ENCODE measurements at regions of chr6 and their contacts with region 1.

Region 1: DNA sequence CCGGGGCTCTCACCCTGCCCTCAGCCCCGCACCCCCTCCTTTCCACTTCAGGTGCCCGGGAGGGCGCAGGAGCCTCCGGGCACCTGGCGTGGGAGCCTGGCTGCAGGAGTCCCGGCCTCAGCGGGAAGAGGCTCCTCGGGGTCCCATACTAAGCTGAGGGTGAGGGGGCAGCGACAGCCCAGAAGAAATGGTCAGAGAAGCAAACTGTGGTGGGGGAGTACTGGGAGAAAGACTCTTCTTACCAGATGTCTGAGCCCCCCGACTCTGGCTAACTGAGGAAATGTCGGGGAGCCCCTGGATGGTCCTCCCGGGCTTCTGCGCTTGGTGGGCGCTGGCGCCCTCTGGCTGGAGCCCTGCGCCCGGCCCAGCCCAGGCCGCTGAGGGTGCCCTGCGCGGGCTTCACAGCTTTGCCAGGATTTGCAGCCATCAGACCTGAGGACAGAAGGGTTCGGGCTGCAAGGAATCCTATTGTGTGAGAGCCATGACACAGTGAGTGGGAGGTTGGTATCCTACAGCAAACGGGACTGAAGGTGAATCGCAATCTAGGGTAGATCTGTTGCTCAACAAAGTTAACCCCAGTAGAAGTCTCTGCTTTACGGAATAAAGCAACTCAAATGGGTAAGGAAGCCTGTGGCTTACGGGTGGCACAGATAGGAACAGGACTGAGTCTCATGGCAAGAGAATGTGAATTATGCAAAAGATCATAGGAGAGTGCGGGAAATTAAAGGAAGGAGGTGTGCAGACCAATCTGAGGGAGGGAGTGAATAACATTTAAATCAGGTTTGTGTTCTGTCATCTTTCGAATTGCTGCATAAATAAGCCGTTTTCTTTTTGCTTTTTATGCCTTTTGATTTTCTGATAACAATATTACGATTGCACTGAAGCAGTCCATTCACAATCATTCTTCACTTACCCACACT is 639 bp upstream of the RCAN2 start:
- DNase-seq: peak; percentile 57 to 68
- ATAC-seq: peak; percentile 87 to 91 (median 90)
- H3K4me3 ChIP-seq: peak overlapping the region; percentile 81
- H3K27ac ChIP-seq: peak overlapping the region; percentile 70
- H3K4me1 ChIP-seq: no peaks in the 10 kb centered on the region
- H3K27me3 ChIP-seq: no peaks in the 10 kb centered on the region
- CTCF ChIP-seq: peak; percentile 75

Region 2: DNA sequence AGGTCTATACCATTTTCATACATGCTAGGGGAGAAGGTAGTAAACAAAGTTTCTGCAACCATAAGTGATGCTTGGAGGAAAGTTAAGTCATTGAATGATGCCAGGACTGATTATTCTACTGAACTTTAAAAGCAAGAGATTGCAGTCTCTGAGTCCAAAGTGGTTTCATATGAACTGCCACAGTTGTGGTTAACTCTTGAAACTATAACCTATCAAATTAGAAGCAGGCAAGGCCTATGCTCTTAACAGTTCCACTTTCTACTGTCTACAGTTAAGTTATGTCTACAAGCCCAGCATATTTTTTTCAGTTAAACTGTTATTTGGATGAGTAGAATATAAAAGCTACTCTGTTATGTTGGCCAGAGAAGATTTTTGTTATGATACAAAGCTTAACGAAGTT is 1490.2 kb before region 1 on chr6:
- intact Hi-C with region 1: no loop called
- DNase-seq: no peak
- ATAC-seq: no peak
- H3K4me3 ChIP-seq: no peak overlapping the region
- H3K27ac ChIP-seq: no peak overlapping the region
- H3K4me1 ChIP-seq: no peaks in the 10 kb centered on the region
- H3K27me3 ChIP-seq: no peaks in the 10 kb centered on the region
- CTCF ChIP-seq: no peak

Region 3: GRCh38 chr6:46221222-46221793 is 270.6 kb before region 1 on chr6:
- intact Hi-C with region 1: loop called (anchors 5 to 10 kb)
- DNase-seq: no peak
- ATAC-seq: peak; percentile 59 to 79 (median 70)
- H3K4me3 ChIP-seq: no peak overlapping the region
- H3K27ac ChIP-seq: no peak overlapping the region
- H3K4me1 ChIP-seq: no peaks in the 10 kb centered on the region
- H3K27me3 ChIP-seq: no peaks in the 10 kb centered on the region
- CTCF ChIP-seq: peak; percentile 85

Region 4: GRCh38 chr6:46419576-46420002 is 72.3 kb before region 1 on chr6:
- intact Hi-C with region 1: loop called (anchors 2 kb)
- DNase-seq: no peak
- ATAC-seq: peak; percentile 57 to 85 (median 70)
- H3K4me3 ChIP-seq: no peak overlapping the region
- H3K27ac ChIP-seq: no peak overlapping the region
- H3K4me1 ChIP-seq: peaks cover 11% of the 10 kb centered on the region
- H3K27me3 ChIP-seq: no peaks in the 10 kb centered on the region
- CTCF ChIP-seq: peak; percentile 82

Region 5: GRCh38 chr6:46437671-46438221 is 54.1 kb before region 1 on chr6:
- intact Hi-C with region 1: loop called (anchors 5 kb)
- DNase-seq: no peak
- ATAC-seq: peak; percentile 90 to 96 (median 94)
- H3K4me3 ChIP-seq: no peak overlapping the region
- H3K27ac ChIP-seq: peak overlapping the region; percentile 82
- H3K4me1 ChIP-seq: peaks cover 37% of the 10 kb centered on the region
- H3K27me3 ChIP-seq: no peaks in the 10 kb centered on the region
- CTCF ChIP-seq: no peak

Region 6: GRCh38 chr6:46453221-46453620 is 38.7 kb before region 1 on chr6:
- intact Hi-C with region 1: no loop called
- DNase-seq: no peak
- ATAC-seq: no peak
- H3K4me3 ChIP-seq: no peak overlapping the region
- H3K27ac ChIP-seq: no peak overlapping the region
- H3K4me1 ChIP-seq: peaks cover 3% of the 10 kb centered on the region
- H3K27me3 ChIP-seq: no peaks in the 10 kb centered on the region
- CTCF ChIP-seq: no peak

Region 7: GRCh38 chr6:46626228-46626909 is 134.5 kb after region 1 on chr6:
- intact Hi-C with region 1: loop called in 1 of 2 experiments (anchors 10 kb)
- DNase-seq: no peak
- ATAC-seq: peak in 2 of 4 donors; percentile 59 to 79
- H3K4me3 ChIP-seq: no peak overlapping the region
- H3K27ac ChIP-seq: no peak overlapping the region
- H3K4me1 ChIP-seq: no peaks in the 10 kb centered on the region
- H3K27me3 ChIP-seq: no peaks in the 10 kb centered on the region
- CTCF ChIP-seq: peak; percentile 73